WTC11 (cell line): ENCODE measurements at regions of chr14 and their contacts with region 1.

Region 1: DNA sequence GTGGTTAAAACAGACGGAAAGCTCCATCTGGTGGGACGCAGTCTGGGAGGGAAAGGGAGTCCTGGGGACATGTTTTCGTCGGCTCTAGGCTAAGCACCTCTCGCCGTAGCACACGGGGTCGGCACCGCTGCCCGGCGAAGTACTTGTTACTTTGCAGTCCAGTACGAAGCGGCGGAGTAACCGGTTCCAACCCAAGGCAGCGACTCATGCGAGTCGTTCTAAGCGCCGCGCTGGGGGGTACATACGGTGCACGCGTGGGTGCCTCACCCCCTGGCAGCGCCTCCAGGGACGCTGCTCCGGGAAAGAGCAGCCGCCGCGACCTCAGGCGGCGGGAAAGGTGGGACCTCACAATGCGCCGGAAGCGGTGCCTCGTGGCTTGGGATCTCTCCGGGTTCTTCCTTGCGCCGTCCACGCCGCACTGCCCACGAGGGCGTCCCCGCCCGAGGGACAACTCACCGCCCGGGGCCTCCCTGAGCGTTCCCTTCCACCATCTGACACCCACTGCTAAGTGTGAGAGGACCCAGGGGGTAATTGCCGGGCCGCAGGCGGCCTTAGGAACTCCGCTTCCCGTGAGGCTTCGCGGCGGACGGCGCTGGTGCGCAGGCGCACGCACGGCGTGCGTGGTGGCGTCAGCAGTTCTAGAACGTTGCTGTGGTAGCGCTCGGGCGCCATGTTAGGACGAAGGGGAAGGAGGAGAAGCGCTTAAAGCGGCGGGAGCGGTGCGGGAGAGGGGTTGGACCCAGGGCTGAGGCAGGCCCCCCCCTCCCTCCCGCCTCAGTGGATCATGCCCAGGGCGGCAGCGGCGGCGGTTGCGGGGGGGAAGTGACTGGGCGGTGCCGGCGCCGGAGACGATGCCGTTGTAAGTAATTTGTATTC is at the start of gene PAPOLA:
- DNase-seq: peak; percentile 93
- ATAC-seq: peak; percentile 90
- H3K4me3 Mint-ChIP-seq: peak within 1 kb of the TSS; percentile 97
- H3K27ac Mint-ChIP-seq: peak within 1 kb of the TSS; percentile 99
- H3K4me1 Mint-ChIP-seq: peaks cover 33% of the 10 kb centered on the region
- H3K27me3 Mint-ChIP-seq: no peaks in the 10 kb centered on the region
- CTCF ChIP-seq: no peak
- total RNA-seq, gene PAPOLA: 184 to 210 TPM (median 193 TPM) in 3 replicates

Region 2: DNA sequence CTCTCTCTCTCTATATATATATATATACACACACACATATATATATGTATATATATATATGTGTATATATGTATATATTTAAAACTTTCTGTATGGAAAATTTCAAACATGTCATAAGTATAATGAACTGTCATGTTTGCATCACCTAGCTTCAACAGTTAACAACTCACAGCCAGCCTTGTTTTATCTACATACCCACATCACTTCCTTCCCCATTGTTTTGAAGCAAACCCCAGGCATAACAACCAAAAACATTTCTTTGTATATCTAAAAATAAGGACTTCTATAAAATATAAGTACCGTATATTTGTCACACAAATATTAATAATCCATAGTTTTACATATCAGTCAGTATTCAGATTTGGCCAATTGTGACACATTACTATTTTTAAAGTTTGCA is 57.6 kb after region 1 on chr14:
- CTCF ChIA-PET with region 1: no interaction called
- POLR2A ChIA-PET with region 1: interaction called, 10 read pairs
- DNase-seq: no peak
- ATAC-seq: no peak
- H3K4me3 Mint-ChIP-seq: no peak overlapping the region
- H3K27ac Mint-ChIP-seq: no peak overlapping the region
- H3K4me1 Mint-ChIP-seq: no peaks in the 10 kb centered on the region
- H3K27me3 Mint-ChIP-seq: no peaks in the 10 kb centered on the region
- CTCF ChIP-seq: no peak